HepG2 (cell line): ENCODE measurements at regions of chr4 and their contacts with region 1.

Region 1: GRCh38 chr4:69689599-69689998 is 36.6 kb upstream of the UGT2A1 start:
- DNase-seq: peak; percentile 66
- ATAC-seq: no peak
- H3K4me3 ChIP-seq: no peak overlapping the region
- H3K27ac ChIP-seq: peak overlapping the region; percentile 2
- H3K4me1 ChIP-seq: peaks cover 19% of the 10 kb centered on the region
- H3K27me3 ChIP-seq: no peaks in the 10 kb centered on the region
- CTCF ChIP-seq: peak; percentile 71
- EP300 ChIP-seq: no peak
- POLR2A ChIP-seq: no peak
- RAD21 ChIP-seq: peak; percentile 82

Region 2: GRCh38 chr4:70269674-70270073 is 580.1 kb after region 1 on chr4:
- CTCF ChIA-PET with region 1: no interaction called
- POLR2A ChIA-PET with region 1: no interaction called
- in situ Hi-C with region 1: no loop called
- intact Hi-C with region 1: loop called (anchors 2 kb)
- DNase-seq: peak; percentile 10
- ATAC-seq: no peak
- H3K4me3 ChIP-seq: no peak overlapping the region
- H3K27ac ChIP-seq: no peak overlapping the region
- H3K4me1 ChIP-seq: no peaks in the 10 kb centered on the region
- H3K27me3 ChIP-seq: no peaks in the 10 kb centered on the region
- CTCF ChIP-seq: peak; percentile 39
- EP300 ChIP-seq: no peak
- POLR2A ChIP-seq: no peak
- RAD21 ChIP-seq: no peak; the same call in 1 of the 2 replicates

Region 3: GRCh38 chr4:70559211-70559830 is 869.7 kb after region 1 on chr4:
- CTCF ChIA-PET with region 1: interaction called, 11 read pairs
- POLR2A ChIA-PET with region 1: no interaction called
- in situ Hi-C with region 1: no loop called
- intact Hi-C with region 1: loop called (anchors 1 kb)
- DNase-seq: peak; percentile 67
- ATAC-seq: peak; percentile 74; the same call in 2 of the 3 replicates
- H3K4me3 ChIP-seq: no peak overlapping the region
- H3K27ac ChIP-seq: no peak overlapping the region
- H3K4me1 ChIP-seq: peaks cover 28% of the 10 kb centered on the region
- H3K27me3 ChIP-seq: no peaks in the 10 kb centered on the region
- CTCF ChIP-seq: peak; percentile 81
- EP300 ChIP-seq: no peak
- POLR2A ChIP-seq: no peak
- RAD21 ChIP-seq: peak; percentile 34; the same call in 1 of the 2 replicates